ENCODE measurements at regions of chrX and their contacts with region 1.

Region 1: GRCh38 chrX:16826207-16826606 is 39.9 kb downstream of the TXLNG start:
- DNase-seq: no peak
- ATAC-seq: no peak
- H3K4me3 ChIP-seq: no peak overlapping the region
- H3K27ac ChIP-seq: no peak overlapping the region
- H3K4me1 ChIP-seq: no peaks in the 10 kb centered on the region
- H3K27me3 ChIP-seq: no peaks in the 10 kb centered on the region
- CTCF ChIP-seq: peak; percentile 30

Region 2: GRCh38 chrX:17046478-17047097 is 220.4 kb after region 1 on chrX:
- intact Hi-C with region 1: loop called (anchors 10 kb)
- DNase-seq: no peak
- ATAC-seq: peak; percentile 90
- H3K4me3 ChIP-seq: no peak overlapping the region
- H3K27ac ChIP-seq: no peak overlapping the region
- H3K4me1 ChIP-seq: no peaks in the 10 kb centered on the region
- H3K27me3 ChIP-seq: no peaks in the 10 kb centered on the region
- CTCF ChIP-seq: peak; percentile 66